CD4-positive, alpha-beta memory T cell (primary cell): ENCODE measurements at regions of chr1 and their contacts with region 1.

Region 1: GRCh38 chr1:24502709-24503058 is at the start of gene RCAN3:
- DNase-seq: peak; percentile 89 to 93 (median 90)
- H3K4me3 ChIP-seq: peak within 1 kb of the TSS; percentile 83 to 84
- H3K4me3 Mint-ChIP-seq: peak within 1 kb of the TSS; percentile 96 to 100 (median 99)
- H3K27ac ChIP-seq: peak within 1 kb of the TSS; percentile 93
- H3K27ac Mint-ChIP-seq: peak within 1 kb of the TSS; percentile 92 to 99 (median 98)
- H3K4me1 ChIP-seq: peaks cover 67% of the 10 kb centered on the region
- H3K4me1 Mint-ChIP-seq: peaks cover 43 to 83% (median 57%) of the 10 kb centered on the region in 4 donors
- H3K27me3 ChIP-seq: no peaks in the 10 kb centered on the region
- H3K27me3 Mint-ChIP-seq: no peaks in the 10 kb centered on the region
- total RNA-seq, gene RCAN3: 171 to 178 TPM

Region 2: GRCh38 chr1:24481101-24481500 is 21.6 kb before region 1 on chr1:
- CTCF ChIA-PET with region 1: interaction called, 38 read pairs
- POLR2A ChIA-PET with region 1: interaction called, 459 read pairs
- intact Hi-C with region 1: loop called (anchors 1 kb)
- DNase-seq: peak; percentile 59 to 77 (median 67)
- H3K4me3 ChIP-seq: peak overlapping the region in 1 of 2 donors; percentile 50
- H3K4me3 Mint-ChIP-seq: peak overlapping the region; percentile 66 to 96 (median 86)
- H3K27ac ChIP-seq: peak overlapping the region; percentile 61
- H3K27ac Mint-ChIP-seq: peak overlapping the region; percentile 96 to 99 (median 99)
- H3K4me1 ChIP-seq: peaks cover 62% of the 10 kb centered on the region
- H3K4me1 Mint-ChIP-seq: peaks cover 42 to 72% (median 57%) of the 10 kb centered on the region in 4 donors
- H3K27me3 ChIP-seq: no peaks in the 10 kb centered on the region
- H3K27me3 Mint-ChIP-seq: no peaks in the 10 kb centered on the region

Region 3: GRCh38 chr1:24491577-24492360 is 10.9 kb before region 1 on chr1:
- CTCF ChIA-PET with region 1: interaction called, 38 read pairs
- POLR2A ChIA-PET with region 1: interaction called, 422 read pairs
- intact Hi-C with region 1: loop called (anchors 1 kb)
- DNase-seq: no peak
- H3K4me3 ChIP-seq: no peak overlapping the region
- H3K4me3 Mint-ChIP-seq: no peak overlapping the region
- H3K27ac ChIP-seq: no peak overlapping the region
- H3K27ac Mint-ChIP-seq: peak overlapping the region in 2 of 7 donors; percentile 22 to 31
- H3K4me1 ChIP-seq: peaks cover 30% of the 10 kb centered on the region
- H3K4me1 Mint-ChIP-seq: peaks cover 16 to 33% (median 23%) of the 10 kb centered on the region in 4 donors
- H3K27me3 ChIP-seq: no peaks in the 10 kb centered on the region
- H3K27me3 Mint-ChIP-seq: no peaks in the 10 kb centered on the region

Region 4: DNA sequence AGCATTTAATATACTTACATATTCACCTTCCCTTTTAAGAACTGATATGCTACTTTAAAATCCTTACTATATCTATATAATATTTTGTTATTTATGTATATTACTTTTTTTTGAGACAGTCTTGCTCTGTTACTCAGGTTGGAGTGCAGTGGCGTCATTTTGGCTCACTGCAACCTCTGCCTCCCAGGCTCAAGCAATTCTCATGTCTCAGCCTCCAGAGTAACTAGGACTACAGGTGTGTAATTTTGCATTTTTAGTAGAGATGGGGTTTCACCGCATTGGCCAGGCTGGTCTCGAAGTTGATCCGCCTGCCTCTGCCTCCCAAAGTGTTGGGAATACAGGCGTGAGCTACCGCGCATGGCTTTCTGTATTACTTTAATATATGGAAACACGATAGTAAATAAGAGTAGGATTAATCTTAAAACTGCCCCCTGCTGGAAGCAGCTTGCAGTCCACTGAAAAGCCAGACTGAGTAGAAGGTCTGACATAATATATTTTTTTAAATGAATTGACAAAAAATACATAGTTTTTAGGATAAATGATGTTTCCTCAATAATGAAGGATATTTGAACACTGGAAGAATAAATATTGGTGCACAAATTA is 24.4 kb after region 1 on chr1:
- CTCF ChIA-PET with region 1: interaction called, 55 read pairs
- POLR2A ChIA-PET with region 1: interaction called, 74 read pairs
- intact Hi-C with region 1: loop called (anchors 1 kb)
- DNase-seq: peak; percentile 47 to 59 (median 53)
- H3K4me3 ChIP-seq: no peak overlapping the region
- H3K4me3 Mint-ChIP-seq: peak overlapping the region in 3 of 8 donors; percentile 36 to 58 (median 52)
- H3K27ac ChIP-seq: peak overlapping the region; percentile 31
- H3K27ac Mint-ChIP-seq: peak overlapping the region; percentile 65 to 94 (median 87)
- H3K4me1 ChIP-seq: peaks cover 71% of the 10 kb centered on the region
- H3K4me1 Mint-ChIP-seq: peaks cover 46 to 82% (median 63%) of the 10 kb centered on the region in 4 donors
- H3K27me3 ChIP-seq: no peaks in the 10 kb centered on the region
- H3K27me3 Mint-ChIP-seq: no peaks in the 10 kb centered on the region

Region 5: GRCh38 chr1:24541711-24542346 is 39.1 kb after region 1 on chr1:
- CTCF ChIA-PET with region 1: interaction called, 4 read pairs
- POLR2A ChIA-PET with region 1: interaction called, 74 read pairs
- intact Hi-C with region 1: no loop called
- DNase-seq: no peak
- H3K4me3 ChIP-seq: no peak overlapping the region
- H3K4me3 Mint-ChIP-seq: peak overlapping the region in 1 of 8 donors; percentile 29
- H3K27ac ChIP-seq: no peak overlapping the region
- H3K27ac Mint-ChIP-seq: peak overlapping the region; percentile 53 to 83 (median 71)
- H3K4me1 ChIP-seq: peaks cover 62% of the 10 kb centered on the region
- H3K4me1 Mint-ChIP-seq: peaks cover 46 to 71% (median 57%) of the 10 kb centered on the region in 4 donors
- H3K27me3 ChIP-seq: no peaks in the 10 kb centered on the region
- H3K27me3 Mint-ChIP-seq: no peaks in the 10 kb centered on the region

Region 6: DNA sequence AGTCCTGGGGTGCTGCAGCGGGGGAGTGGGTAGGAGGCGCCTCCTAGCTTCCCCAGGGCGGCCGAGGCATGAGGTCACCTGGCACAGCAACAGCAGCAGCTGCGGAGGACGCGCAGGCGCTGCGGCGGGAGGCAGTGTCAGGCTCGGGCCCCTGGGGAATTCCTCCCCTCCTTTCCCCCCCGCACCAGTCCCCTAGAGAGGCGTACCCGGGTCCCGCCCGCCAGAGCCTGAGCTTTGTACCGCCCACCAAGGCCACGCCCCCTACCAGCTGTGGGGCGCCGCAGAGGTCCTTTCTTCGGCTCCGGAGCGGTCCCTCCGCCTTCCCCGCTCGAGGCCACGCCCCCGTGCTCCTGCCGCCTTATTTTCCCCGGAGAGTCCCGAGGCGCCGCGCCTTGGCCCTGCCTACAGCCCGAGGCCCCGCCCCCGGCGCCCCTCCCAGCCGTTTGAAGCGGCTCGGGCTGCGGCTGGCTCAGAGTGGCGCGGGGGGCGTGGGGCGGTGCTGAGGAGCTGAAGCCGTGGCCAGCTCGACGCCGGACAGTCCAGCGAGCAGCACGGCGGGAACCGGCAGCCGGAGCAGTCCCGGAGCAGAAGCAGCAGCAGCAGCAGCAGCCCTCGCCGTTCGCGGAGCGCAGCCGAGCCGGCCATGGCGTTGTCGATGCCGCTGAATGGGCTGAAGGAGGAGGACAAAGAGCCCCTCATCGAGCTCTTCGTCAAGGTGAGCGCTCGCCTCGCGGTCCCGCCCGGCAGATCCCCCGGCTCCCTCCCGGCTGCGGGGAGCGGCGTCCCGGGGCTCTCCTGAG is 242.4 kb after region 1 on chr1 and contains the start of gene CLIC4:
- CTCF ChIA-PET with region 1: no interaction called
- POLR2A ChIA-PET with region 1: no interaction called
- intact Hi-C with region 1: loop called (anchors 10 kb)
- DNase-seq: peak; percentile 98 to 99 (median 99)
- H3K4me3 ChIP-seq: peak within 1 kb of the TSS in 1 of 2 donors; percentile 58
- H3K4me3 Mint-ChIP-seq: peak within 1 kb of the TSS; percentile 83 to 93 (median 87)
- H3K27ac ChIP-seq: peak within 1 kb of the TSS; percentile 55
- H3K27ac Mint-ChIP-seq: peak within 1 kb of the TSS; percentile 58 to 90 (median 86)
- H3K4me1 ChIP-seq: peaks cover 26% of the 10 kb centered on the region
- H3K4me1 Mint-ChIP-seq: peaks cover 2 to 21% (median 11%) of the 10 kb centered on the region in 4 donors
- H3K27me3 ChIP-seq: no peaks in the 10 kb centered on the region
- H3K27me3 Mint-ChIP-seq: peaks cover 6 to 9% of the 10 kb centered on the region in 2 donors
- total RNA-seq, gene CLIC4: 3.0 to 3.8 TPM